AG04450 (cell line): ENCODE measurements at regions of chr6 and their contacts with region 1.

Region 1: DNA sequence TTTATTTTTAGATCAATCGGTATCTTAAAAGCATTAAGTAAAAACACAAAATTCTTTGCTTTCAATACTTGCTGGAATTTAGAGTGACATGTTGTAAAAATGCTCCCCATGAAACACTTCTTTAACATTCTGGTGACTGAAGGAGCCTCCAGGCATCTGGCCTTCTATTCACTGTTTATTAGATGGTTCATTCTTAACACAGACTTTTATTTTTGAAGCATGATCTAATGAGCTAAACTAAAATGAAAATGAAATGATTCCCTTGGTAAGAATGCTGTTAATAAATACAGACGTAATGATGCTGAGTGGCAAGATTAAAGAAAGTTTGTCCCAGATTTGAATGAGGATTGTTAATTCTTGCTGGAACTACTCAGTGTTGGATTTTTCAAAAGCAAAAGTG is 698.4 kb downstream of the TENT5A start:
- DNase-seq: no peak
- H3K4me3 ChIP-seq: no peak overlapping the region
- H3K27ac ChIP-seq: no peak overlapping the region
- H3K27me3 ChIP-seq: no peaks in the 10 kb centered on the region
- CTCF ChIP-seq: no peak

Region 2: DNA sequence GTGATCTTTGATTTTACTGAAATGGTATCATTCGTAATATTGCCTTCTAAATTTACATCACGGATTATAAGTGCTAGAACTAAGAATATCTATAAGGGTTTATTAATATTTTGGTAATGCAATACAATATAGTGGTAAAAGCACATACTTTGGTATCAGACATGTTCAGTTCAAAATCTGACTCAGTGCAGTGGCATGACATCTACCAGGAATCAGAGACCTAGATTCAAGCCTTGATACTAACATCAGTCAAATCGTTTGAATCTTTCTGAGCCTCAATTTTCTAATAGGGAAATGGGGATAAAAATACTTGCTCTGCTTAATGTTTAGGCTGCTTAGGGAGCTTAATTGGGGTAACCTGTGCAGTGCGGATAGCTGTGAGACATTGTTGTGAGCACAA is 459.6 kb before region 1 on chr6:
- CTCF ChIA-PET with region 1: no interaction called
- POLR2A ChIA-PET with region 1: no interaction called
- DNase-seq: no peak
- H3K4me3 ChIP-seq: no peak overlapping the region
- H3K27ac ChIP-seq: no peak overlapping the region
- H3K27me3 ChIP-seq: no peaks in the 10 kb centered on the region
- CTCF ChIP-seq: no peak

Region 3: GRCh38 chr6:81075974-81076373 is 21.9 kb after region 1 on chr6:
- CTCF ChIA-PET with region 1: interaction called, 10 read pairs
- POLR2A ChIA-PET with region 1: no interaction called
- DNase-seq: no peak
- H3K4me3 ChIP-seq: no peak overlapping the region
- H3K27ac ChIP-seq: no peak overlapping the region
- H3K27me3 ChIP-seq: no peaks in the 10 kb centered on the region
- CTCF ChIP-seq: peak; percentile 70